GM12878 (cell line): ENCODE measurements at regions of chr1 and their contacts with region 1.

Region 1: DNA sequence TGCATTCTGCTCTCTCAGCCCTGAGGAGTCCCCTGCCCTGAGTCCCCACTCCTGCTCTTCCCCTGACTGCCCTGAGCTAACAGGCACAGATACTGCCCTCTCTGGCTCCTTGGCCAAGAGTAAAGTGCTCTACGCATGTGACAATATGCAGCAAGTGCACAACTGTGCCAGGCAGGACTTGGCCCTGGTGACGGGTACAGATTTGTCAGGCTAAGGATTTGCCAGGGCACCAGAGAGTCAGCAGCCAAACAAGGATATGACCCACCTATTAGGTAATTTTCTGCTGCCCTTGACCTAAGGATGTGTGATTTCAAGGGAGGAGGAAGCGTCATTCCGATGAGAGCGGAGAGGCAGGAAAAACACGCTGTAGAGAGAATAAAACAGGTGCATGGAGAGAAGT is 339.0 kb downstream of the PTPRU start:
- DNase-seq: no peak
- ATAC-seq: no peak
- H3K4me3 ChIP-seq: no peak overlapping the region
- H3K27ac ChIP-seq: no peak overlapping the region
- H3K4me1 ChIP-seq: no peaks in the 10 kb centered on the region
- H3K27me3 ChIP-seq: peaks cover 1 to 2% of the 10 kb centered on the region in 2 experiments; a peak in 2 of 4 replicates
- CTCF ChIP-seq: no peak
- EP300 ChIP-seq: no peak
- POLR2A ChIP-seq: no peak
- RAD21 ChIP-seq: no peak

Region 2: GRCh38 chr1:29607236-29607635 is 32.0 kb after region 1 on chr1:
- CTCF ChIA-PET with region 1: no interaction called
- POLR2A ChIA-PET with region 1: no interaction called
- RAD21 ChIA-PET with region 1: no interaction called
- SMC1A ChIA-PET with region 1: no interaction called
- in situ Hi-C with region 1: no loop called
- intact Hi-C with region 1: loop called (anchors 2 kb)
- DNase-seq: no peak
- ATAC-seq: no peak
- H3K4me3 ChIP-seq: no peak overlapping the region
- H3K27ac ChIP-seq: no peak overlapping the region
- H3K4me1 ChIP-seq: no peaks in the 10 kb centered on the region
- H3K27me3 ChIP-seq: no peaks in the 10 kb centered on the region; a peak in 1 of 4 replicates
- CTCF ChIP-seq: no peak
- EP300 ChIP-seq: no peak
- POLR2A ChIP-seq: no peak
- RAD21 ChIP-seq: no peak